Tibial artery (tissue), 4 donors: ENCODE measurements at regions of chr9 and their contacts with region 1.

Region 1: GRCh38 chr9:101629636-101630035 is 34.9 kb upstream of the PPP3R2 start:
- DNase-seq: no peak
- H3K4me3 ChIP-seq: no peak overlapping the region
- H3K27ac ChIP-seq: no peak overlapping the region
- H3K4me1 ChIP-seq: no peaks in the 10 kb centered on the region
- H3K27me3 ChIP-seq: no peaks in the 10 kb centered on the region
- CTCF ChIP-seq: no peak

Region 2: DNA sequence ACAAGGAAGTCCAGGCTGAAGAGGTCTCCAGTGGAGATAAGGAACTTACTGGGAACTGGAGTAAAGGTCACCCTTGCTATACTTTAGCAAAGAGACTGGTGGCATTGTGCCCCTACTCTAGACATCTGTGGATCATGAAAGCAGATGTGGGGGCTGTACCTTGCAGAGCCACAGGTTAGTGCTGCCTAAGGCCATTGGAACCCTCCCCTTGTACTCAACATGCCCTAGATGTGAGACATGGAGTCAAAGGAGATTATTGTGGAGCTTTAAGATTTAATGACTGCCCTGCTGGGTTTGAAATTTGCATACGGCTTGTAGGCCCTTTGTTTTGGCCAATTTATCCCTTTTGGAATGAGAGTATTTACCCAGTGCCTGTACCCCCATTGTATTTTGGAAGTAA is 506.1 kb after region 1 on chr9:
- intact Hi-C with region 1: loop called (anchors 5 kb)
- DNase-seq: no peak
- H3K4me3 ChIP-seq: no peak overlapping the region
- H3K27ac ChIP-seq: no peak overlapping the region
- H3K4me1 ChIP-seq: no peaks in the 10 kb centered on the region
- H3K27me3 ChIP-seq: no peaks in the 10 kb centered on the region
- CTCF ChIP-seq: no peak